ENCODE measurements at regions of chr10 and their contacts with region 1.

Region 1: DNA sequence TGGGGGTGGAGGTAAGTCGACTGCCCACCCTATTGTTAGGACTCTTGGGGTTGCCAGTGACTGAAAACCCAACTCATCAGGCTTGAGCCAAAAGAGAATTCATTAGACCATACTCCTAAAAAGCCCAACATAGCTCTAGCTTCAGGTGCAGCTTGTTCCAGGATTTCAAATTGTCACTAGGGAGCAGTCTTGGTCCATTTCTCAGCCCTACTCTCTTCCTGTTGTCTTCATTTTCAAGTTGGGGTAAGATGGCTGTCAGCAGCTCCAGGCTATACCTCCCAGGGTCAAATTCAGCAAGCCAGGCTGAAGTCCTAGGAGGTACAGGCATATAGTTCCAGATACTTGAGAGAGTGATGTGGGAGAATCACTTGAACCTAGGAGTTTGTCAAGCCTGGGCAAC is 14.9 kb upstream of the COL13A1 start:
- DNase-seq: no peak
- H3K4me3 ChIP-seq: no peak overlapping the region
- H3K27ac ChIP-seq: no peak overlapping the region
- H3K4me1 ChIP-seq: peaks cover 0 to 3% (median 0%) of the 10 kb centered on the region in 4 experiments; a peak in 1 of 7 replicates
- H3K27me3 ChIP-seq: peaks cover 0 to 5% (median 0%) of the 10 kb centered on the region in 4 experiments; a peak in 1 of 7 replicates
- CTCF ChIP-seq: peak in 2 of 3 experiments; percentile 62 to 64; a peak in 3 of 4 replicates
- EP300 ChIP-seq: no peak
- POLR2A ChIP-seq: no peak
- RAD21 ChIP-seq: peak; percentile 82 to 85

Region 2: DNA sequence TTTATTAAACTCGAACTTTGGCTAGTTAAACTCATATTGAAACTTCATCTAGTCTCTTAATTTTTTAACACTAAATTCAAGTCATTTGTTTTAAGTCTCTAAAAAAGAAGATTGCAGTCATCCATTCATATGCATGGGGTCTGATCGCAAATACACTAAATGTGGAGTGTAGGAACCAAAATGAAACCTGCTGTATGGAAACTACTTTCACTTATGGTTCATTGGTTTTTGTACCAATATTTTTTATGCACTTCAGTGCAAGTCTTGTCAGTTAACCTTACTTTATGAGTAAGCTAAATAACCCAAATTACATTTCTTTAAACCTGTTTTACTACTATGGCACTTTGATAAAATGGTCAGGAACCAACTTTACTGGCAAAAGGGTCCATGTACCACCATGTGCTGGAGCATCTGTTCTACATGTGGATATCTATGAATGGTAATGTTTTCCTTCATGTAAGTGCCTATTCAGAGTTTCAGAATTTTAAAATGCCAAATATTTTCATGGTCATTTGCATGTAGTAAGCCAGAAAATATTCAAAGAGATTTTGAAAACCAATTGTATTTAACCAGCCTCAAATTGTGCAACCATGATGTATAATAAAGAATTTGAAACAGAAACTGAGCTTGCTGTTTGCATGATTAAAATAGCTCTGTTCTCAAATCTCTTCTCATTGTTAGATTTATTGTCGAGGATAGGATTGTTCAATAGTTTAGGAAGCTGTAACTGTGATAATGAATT is 614.4 kb before region 1 on chr10:
- CTCF ChIA-PET with region 1: no interaction called
- POLR2A ChIA-PET with region 1: no interaction called
- DNase-seq: no peak
- H3K4me3 ChIP-seq: no peak overlapping the region
- H3K27ac ChIP-seq: no peak overlapping the region
- H3K4me1 ChIP-seq: no peaks in the 10 kb centered on the region
- H3K27me3 ChIP-seq: no peaks in the 10 kb centered on the region; a peak in 1 of 7 replicates
- CTCF ChIP-seq: no peak
- EP300 ChIP-seq: no peak
- POLR2A ChIP-seq: no peak
- RAD21 ChIP-seq: no peak

Region 3: DNA sequence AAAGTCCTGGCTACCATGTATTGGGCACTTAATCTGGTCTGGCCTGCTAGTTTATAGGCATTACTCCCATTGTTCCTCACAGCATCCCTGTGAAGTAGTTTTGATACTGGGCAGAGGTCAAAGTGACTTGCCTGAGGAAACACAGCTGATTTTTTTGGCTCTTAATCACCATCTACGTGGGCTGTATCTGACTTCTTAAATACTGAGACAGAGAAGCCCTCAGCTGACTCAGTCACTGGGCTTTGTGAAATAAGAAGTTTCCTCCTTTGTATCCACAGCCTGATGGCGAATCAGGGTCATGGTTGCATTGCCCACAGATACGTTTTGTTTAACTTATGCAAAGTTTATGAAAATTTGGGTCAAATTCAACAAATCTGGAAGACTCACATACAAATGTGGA is 383.3 kb before region 1 on chr10:
- CTCF ChIA-PET with region 1: no interaction called
- POLR2A ChIA-PET with region 1: no interaction called
- DNase-seq: no peak
- H3K4me3 ChIP-seq: no peak overlapping the region
- H3K27ac ChIP-seq: no peak overlapping the region
- H3K4me1 ChIP-seq: peaks cover 0 to 10% (median 7%) of the 10 kb centered on the region in 4 experiments; a peak in 6 of 7 replicates
- H3K27me3 ChIP-seq: no peaks in the 10 kb centered on the region
- CTCF ChIP-seq: no peak
- EP300 ChIP-seq: no peak
- POLR2A ChIP-seq: no peak
- RAD21 ChIP-seq: no peak

Region 4: DNA sequence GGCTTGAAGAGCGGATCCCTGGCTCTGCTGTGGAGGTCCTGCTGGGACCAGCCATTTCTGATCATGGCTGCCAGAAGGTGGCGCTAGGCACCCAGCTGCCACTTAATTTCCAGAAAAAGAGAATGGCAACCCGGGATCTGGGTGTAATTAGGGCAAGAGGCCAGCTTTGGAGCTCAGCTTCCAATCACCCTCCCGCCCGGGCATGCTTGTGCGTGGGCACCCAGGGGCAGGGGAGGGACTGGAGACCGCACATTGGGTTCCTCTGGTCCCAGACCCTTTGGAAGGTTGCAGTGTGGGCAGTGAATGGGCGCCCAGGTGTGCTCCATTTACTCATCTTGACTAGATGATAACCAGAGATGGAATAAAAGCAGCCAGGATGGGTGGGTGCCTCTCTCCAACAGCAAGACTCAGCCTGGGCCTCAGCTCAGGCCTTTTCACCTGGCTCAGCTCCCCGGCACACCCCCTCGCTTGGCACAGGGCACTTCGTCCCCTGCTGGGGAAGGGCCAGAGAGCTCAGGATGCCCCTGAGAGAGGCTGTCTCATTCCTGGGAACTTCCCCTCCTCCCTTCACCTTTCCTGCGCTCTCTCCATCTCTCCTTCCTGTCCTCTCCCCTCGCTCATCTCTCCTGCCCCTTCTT is 142.0 kb before region 1 on chr10:
- CTCF ChIA-PET with region 1: interaction called, 16 read pairs
- POLR2A ChIA-PET with region 1: no interaction called
- DNase-seq: peak in 1 of 2 experiments; percentile 86
- H3K4me3 ChIP-seq: no peak overlapping the region
- H3K27ac ChIP-seq: no peak overlapping the region
- H3K4me1 ChIP-seq: peaks cover 0 to 6% (median 4%) of the 10 kb centered on the region in 4 experiments; a peak in 4 of 7 replicates
- H3K27me3 ChIP-seq: no peaks in the 10 kb centered on the region; a peak in 2 of 7 replicates
- CTCF ChIP-seq: peak; percentile 79 to 94 (median 84)
- EP300 ChIP-seq: no peak
- POLR2A ChIP-seq: no peak
- RAD21 ChIP-seq: peak; percentile 90 to 96

Region 5: GRCh38 chr10:69742928-69743602 is 43.7 kb before region 1 on chr10:
- CTCF ChIA-PET with region 1: interaction called, 39 read pairs
- POLR2A ChIA-PET with region 1: no interaction called
- DNase-seq: peak; percentile 19 to 86
- H3K4me3 ChIP-seq: no peak overlapping the region
- H3K27ac ChIP-seq: no peak overlapping the region
- H3K4me1 ChIP-seq: peaks cover 0 to 9% (median 1%) of the 10 kb centered on the region in 4 experiments; a peak in 3 of 7 replicates
- H3K27me3 ChIP-seq: no peaks in the 10 kb centered on the region
- CTCF ChIP-seq: peak; percentile 89 to 94 (median 90)
- EP300 ChIP-seq: no peak
- POLR2A ChIP-seq: no peak
- RAD21 ChIP-seq: peak; percentile 66 to 81

Region 6: DNA sequence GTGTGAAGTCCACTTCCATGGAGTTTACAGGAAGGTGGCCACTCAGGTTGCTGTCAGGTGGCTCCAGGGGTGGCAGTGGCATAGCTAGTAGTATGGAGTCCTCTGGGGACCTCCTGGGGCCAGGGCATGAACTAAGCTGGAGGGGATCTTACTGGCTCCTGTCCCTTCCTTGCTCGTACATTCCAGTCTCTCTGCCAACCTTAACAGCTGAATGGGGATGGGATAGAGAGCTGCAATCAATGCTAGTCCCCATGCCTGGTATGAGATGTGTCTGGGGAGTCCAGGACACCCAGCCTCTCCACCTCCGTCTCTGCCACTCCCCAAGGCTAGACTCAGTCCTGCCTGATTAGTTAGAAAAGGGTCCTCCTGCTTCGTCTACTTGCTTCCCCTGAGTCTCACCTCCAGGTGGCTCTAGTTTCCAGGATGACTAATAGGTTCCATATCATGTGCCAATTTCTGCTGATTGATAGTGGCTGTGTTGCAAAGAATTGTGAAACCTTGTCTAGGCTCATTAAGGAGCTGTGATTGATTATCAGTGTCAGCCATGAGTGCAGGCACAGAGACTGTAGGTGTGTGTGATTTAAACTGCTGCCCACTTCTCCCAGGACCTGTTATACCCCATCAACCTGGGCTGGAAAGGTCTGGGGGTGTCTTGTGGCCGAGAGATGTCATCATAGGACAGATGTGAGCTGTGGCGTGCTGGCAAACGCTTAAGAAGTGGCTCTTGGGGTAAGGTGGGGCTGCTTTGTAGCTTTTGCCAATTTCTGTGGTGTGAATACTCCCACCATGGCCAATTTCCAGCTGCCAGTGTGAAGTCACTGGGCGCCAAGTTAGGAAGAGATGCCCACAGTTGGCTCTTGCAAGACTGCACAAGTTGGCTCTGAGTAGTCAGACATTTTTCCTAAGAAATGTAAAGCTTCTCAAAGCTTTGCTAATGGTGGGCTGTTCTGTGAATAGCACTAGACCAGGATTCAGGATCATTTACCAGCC is 74.8 kb after region 1 on chr10:
- CTCF ChIA-PET with region 1: interaction called, 42 read pairs
- POLR2A ChIA-PET with region 1: no interaction called
- DNase-seq: no peak
- H3K4me3 ChIP-seq: no peak overlapping the region
- H3K27ac ChIP-seq: no peak overlapping the region; the same call in 1 of the 2 replicates
- H3K4me1 ChIP-seq: peaks cover 0 to 35% (median 19%) of the 10 kb centered on the region in 4 experiments; a peak in 6 of 7 replicates
- H3K27me3 ChIP-seq: no peaks in the 10 kb centered on the region; a peak in 1 of 7 replicates
- CTCF ChIP-seq: peak in 2 of 3 experiments; percentile 51 to 58; a peak in 2 of 4 replicates
- EP300 ChIP-seq: no peak
- POLR2A ChIP-seq: no peak
- RAD21 ChIP-seq: peak; percentile 30 to 58; a peak in 3 of 4 replicates

Region 7: GRCh38 chr10:69901628-69902505 is 115.1 kb after region 1 on chr10:
- CTCF ChIA-PET with region 1: interaction called, 71 read pairs
- POLR2A ChIA-PET with region 1: no interaction called
- DNase-seq: peak; percentile 31 to 71
- H3K4me3 ChIP-seq: no peak overlapping the region
- H3K27ac ChIP-seq: no peak overlapping the region
- H3K4me1 ChIP-seq: peaks cover 0 to 15% (median 7%) of the 10 kb centered on the region in 4 experiments; a peak in 3 of 7 replicates
- H3K27me3 ChIP-seq: no peaks in the 10 kb centered on the region
- CTCF ChIP-seq: peak; percentile 72 to 96 (median 89)
- EP300 ChIP-seq: no peak
- POLR2A ChIP-seq: no peak
- RAD21 ChIP-seq: peak; percentile 52 to 73

Region 8: DNA sequence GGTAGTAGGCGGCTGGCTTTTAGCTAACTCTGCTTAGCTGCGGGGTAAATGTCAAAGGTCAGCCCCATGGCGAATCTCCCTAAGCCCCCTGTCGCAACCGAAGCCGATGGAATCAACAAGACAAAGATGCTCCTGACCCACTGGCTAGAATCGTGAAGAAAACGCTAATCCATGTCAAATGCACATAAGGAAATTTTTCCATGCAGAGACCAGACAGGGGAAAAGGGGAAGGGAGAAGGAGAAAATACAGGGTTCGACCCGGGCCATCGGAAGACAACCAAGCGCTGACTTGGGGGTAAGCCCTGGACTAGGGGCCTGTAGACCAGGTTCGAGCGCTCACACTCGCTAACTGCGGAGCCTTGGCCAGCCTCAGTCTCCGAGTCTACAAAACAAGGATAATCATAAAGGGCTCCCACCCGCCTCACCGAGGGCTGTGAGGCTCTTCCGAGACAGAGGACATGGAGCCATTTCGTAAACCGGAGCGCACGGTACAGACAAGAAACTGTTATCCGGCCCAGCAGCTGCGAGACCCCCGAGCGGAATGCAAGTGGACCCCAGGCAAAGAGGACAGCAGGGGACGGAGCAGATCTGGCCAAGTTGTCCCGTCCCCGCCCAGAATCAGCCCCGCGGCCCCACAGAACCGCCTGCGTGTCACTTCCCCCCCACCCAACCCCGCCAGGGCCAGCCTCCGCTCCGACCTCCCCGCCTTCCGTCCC is 383.0 kb after region 1 on chr10:
- CTCF ChIA-PET with region 1: no interaction called
- POLR2A ChIA-PET with region 1: no interaction called
- DNase-seq: no peak
- H3K4me3 ChIP-seq: peak overlapping the region; percentile 85 to 97 (median 96)
- H3K27ac ChIP-seq: no peak overlapping the region
- H3K4me1 ChIP-seq: 0 out of 7 replicates have a peak, but pooled peaks cover 0 to 3% (median 0%) of the 10 kb centered on the region in 4 experiments
- H3K27me3 ChIP-seq: no peaks in the 10 kb centered on the region
- CTCF ChIP-seq: no peak
- EP300 ChIP-seq: no peak
- POLR2A ChIP-seq: no peak
- RAD21 ChIP-seq: no peak

Measured in H1 (cell line).